ENCODE measurements at regions of chr12 and their contacts with region 1.

Region 1: DNA sequence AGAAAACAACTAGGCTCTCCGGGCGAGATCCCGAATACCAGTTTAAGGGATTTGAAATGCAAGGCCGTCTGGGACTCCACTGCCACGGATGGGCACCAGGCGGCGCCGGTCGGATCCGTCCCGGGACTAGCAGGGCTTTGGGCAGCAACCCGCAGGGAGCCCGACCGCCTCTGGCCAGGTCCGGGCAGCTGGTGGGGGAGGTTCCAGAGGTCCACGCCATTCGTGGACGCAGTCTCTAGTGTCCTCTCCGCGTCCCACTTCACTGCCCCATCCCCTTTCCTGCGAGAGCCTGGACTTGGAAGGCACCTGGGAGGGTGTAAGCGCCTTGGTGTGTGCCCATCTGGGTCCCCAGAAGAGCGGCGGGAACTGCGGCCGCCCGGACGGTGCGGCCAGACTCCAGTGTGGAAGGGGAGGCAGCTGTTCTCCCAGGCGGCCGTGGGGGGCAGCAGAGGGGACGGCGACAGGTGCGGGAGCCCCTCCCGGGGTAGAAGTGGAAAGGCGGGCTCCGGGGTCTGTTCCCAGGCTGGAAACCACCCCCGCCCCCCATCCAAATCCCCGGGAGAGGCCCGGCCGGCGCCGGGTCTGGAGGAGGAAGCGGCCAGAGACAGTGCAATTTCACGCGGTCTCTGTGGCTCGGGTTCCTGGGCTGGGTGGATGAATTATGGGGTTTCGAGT is 838 bp upstream of the ERBB3 start:
- DNase-seq: peak; percentile 74 to 91
- H3K4me3 ChIP-seq: peak overlapping the region; percentile 69
- H3K27ac ChIP-seq: peak overlapping the region; percentile 86
- H3K4me1 ChIP-seq: peaks cover 26% of the 10 kb centered on the region
- H3K27me3 ChIP-seq: no peaks in the 10 kb centered on the region
- CTCF ChIP-seq: peak; percentile 74

Region 2: GRCh38 chr12:54475537-54475936 is 1603.6 kb before region 1 on chr12:
- CTCF ChIA-PET with region 1: interaction called, 14 read pairs
- POLR2A ChIA-PET with region 1: no interaction called
- intact Hi-C with region 1: no loop called
- DNase-seq: peak in 1 of 2 experiments; percentile 45
- H3K4me3 ChIP-seq: no peak overlapping the region
- H3K27ac ChIP-seq: no peak overlapping the region
- H3K4me1 ChIP-seq: peaks cover 11% of the 10 kb centered on the region
- H3K27me3 ChIP-seq: peaks cover 2% of the 10 kb centered on the region; the same call in 1 of the 2 replicates
- CTCF ChIP-seq: no peak

Region 3: DNA sequence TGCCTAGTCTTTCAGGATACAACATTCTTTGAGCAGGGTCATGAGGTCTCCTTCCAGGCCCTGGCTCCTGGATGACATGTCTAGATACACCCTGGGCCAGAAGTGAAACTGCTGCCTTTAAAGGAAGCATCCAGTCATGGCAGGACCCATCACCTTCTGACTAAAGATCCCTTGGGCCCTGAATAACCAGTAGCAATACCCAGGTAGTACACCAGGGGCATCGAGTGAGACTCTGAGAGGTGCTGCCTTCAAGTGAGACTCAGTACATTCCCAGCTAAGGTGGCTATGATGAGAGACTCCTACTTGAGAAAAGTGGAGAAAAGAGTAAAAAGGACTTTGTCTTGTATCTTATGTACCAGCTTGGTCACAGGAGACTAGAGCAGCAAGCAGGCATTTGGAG is 563.4 kb before region 1 on chr12:
- CTCF ChIA-PET with region 1: no interaction called
- POLR2A ChIA-PET with region 1: no interaction called
- intact Hi-C with region 1: no loop called
- DNase-seq: no peak
- H3K4me3 ChIP-seq: no peak overlapping the region
- H3K27ac ChIP-seq: no peak overlapping the region
- H3K4me1 ChIP-seq: no peaks in the 10 kb centered on the region
- H3K27me3 ChIP-seq: no peaks in the 10 kb centered on the region
- CTCF ChIP-seq: peak; percentile 46; the same call in 1 of the 2 replicates

Region 4: DNA sequence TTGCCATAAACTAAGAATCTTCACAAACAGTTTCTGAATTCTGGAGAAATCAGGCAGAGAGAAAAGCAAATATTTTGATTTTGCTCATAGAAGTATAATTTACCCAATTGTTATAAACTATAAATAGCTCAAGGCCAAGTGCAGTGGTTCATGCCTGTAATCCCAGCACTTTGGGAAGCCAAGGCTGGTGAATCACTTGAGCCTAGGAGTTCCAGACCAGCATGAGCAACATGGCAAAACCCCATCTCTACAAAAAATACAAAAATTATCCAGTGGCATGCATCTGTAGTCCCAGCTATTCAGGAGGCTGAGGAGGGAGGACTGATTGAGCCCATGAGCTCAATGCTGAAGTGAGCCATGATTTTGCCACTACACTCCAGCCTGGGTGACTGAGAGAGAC is 216.8 kb before region 1 on chr12:
- CTCF ChIA-PET with region 1: no interaction called
- POLR2A ChIA-PET with region 1: no interaction called
- intact Hi-C with region 1: no loop called
- DNase-seq: no peak
- H3K4me3 ChIP-seq: no peak overlapping the region
- H3K27ac ChIP-seq: no peak overlapping the region
- H3K4me1 ChIP-seq: no peaks in the 10 kb centered on the region
- H3K27me3 ChIP-seq: no peaks in the 10 kb centered on the region
- CTCF ChIP-seq: no peak

Region 5: GRCh38 chr12:56104109-56104814 is 25.1 kb after region 1 on chr12 and contains the start of gene PA2G4:
- CTCF ChIA-PET with region 1: no interaction called
- POLR2A ChIA-PET with region 1: interaction called, 3 read pairs
- intact Hi-C with region 1: loop called (anchors 1 kb)
- DNase-seq: peak; percentile 97 to 98
- H3K4me3 ChIP-seq: peak within 1 kb of the TSS; percentile 97
- H3K27ac ChIP-seq: peak within 1 kb of the TSS; percentile 50
- H3K4me1 ChIP-seq: peaks cover 25% of the 10 kb centered on the region
- H3K27me3 ChIP-seq: no peaks in the 10 kb centered on the region
- CTCF ChIP-seq: no peak
- total RNA-seq, gene PA2G4: 120 and 159 TPM in 2 replicates